Aorta (tissue), 5 donors: ENCODE measurements at regions of chr5 and their contacts with region 1.

Region 1: DNA sequence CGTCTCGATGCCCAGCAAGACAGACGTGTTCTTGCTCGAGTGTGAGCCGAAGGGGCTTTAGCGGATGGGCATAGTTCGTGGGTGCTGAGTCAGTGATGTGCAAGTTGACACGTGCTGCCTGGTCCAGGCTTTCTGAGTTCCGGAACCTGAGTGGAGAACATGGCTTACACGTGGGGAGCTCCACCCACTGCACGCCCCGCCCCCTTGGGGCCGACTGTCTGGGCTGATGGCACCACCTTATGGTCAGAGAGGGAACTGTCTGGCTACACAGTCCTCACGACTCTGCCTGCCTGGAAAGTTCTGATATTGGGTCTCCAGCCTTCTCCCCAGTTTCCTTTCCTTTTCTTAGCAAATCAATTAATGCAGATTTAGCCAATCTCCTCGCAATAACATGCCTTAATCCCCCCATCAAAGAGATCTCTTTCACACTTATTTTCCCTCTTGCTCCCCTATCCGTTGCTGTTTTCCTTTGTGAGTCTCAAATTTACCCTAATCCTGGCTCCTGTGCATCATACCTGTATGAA is 3.8 kb upstream of the STC2 start:
- DNase-seq: peak; percentile 86 to 94
- ATAC-seq: peak; percentile 91
- H3K4me3 ChIP-seq: no peak overlapping the region
- H3K27ac ChIP-seq: no peak overlapping the region
- H3K4me1 ChIP-seq: no peaks in the 10 kb centered on the region
- H3K27me3 ChIP-seq: peaks cover 0 to 2% of the 10 kb centered on the region in 2 donors

Region 2: DNA sequence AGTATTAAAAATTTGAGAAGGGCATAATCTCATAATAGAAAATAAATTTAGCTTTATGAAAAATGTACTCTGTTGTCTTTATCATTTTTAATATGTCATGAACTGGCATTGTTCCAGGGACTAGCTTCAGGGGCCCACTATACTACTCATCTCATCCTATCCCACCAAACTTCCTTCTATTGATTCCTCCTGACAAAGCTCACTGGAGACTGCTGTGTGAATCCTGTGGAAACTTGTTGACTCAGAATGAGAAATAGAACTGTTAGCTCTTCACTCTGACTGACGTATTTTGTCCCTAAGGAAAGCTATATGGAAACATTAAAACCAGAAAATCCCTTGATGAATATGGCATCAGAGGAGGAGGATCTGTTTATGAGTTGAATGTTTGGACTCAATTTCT is 217.5 kb before region 1 on chr5:
- intact Hi-C with region 1: no loop called
- DNase-seq: no peak
- ATAC-seq: no peak
- H3K4me3 ChIP-seq: no peak overlapping the region
- H3K27ac ChIP-seq: no peak overlapping the region
- H3K4me1 ChIP-seq: no peaks in the 10 kb centered on the region
- H3K27me3 ChIP-seq: no peaks in the 10 kb centered on the region

Region 3: DNA sequence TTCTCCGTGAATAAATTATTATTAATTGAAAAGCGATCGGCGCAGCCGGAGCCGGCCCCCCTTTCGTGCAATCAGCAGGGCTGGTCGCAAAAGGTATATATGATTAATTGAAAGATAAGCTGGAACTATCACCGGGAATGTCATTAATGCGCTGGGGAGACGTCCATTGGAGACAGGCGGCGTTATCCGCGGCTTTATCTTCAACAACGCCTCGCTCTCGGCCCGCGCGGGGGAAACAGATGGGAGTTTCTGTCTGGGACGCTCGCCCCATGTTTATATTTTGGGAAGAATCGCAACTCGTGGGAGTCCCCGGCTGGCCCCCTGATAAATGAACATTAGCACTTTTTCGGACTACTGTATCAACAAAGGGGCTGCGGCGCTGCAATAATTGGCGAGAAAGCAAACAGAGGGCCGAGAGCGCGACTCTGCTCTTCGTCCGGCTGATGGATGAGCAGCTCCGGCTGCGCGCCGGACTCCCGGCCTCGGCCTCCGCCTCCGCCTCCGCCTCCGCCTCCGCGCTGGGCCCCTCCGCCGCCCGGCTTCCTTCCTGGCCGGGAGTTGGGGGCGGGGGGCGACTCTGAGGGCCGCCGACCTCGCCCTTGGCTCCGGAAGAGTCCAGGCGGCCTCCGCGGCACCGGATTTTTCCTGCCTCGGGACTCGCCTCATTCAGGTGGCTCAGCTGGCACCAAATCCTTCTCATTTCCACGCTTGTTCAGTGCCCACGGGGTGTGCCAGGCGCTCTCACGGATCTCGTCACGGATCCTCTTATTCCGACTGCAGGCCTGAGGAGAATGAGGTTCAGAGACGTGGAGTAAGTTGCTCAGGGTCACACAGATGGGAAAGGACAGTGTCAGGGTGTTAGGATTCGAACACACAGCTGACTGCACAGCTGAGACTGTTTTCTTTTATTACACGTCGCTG is 93.4 kb before region 1 on chr5:
- intact Hi-C with region 1: no loop called
- DNase-seq: no peak
- ATAC-seq: no peak
- H3K4me3 ChIP-seq: no peak overlapping the region
- H3K27ac ChIP-seq: no peak overlapping the region
- H3K4me1 ChIP-seq: no peaks in the 10 kb centered on the region
- H3K27me3 ChIP-seq: peaks cover 2% of the 10 kb centered on the region in 2 donors

Region 4: DNA sequence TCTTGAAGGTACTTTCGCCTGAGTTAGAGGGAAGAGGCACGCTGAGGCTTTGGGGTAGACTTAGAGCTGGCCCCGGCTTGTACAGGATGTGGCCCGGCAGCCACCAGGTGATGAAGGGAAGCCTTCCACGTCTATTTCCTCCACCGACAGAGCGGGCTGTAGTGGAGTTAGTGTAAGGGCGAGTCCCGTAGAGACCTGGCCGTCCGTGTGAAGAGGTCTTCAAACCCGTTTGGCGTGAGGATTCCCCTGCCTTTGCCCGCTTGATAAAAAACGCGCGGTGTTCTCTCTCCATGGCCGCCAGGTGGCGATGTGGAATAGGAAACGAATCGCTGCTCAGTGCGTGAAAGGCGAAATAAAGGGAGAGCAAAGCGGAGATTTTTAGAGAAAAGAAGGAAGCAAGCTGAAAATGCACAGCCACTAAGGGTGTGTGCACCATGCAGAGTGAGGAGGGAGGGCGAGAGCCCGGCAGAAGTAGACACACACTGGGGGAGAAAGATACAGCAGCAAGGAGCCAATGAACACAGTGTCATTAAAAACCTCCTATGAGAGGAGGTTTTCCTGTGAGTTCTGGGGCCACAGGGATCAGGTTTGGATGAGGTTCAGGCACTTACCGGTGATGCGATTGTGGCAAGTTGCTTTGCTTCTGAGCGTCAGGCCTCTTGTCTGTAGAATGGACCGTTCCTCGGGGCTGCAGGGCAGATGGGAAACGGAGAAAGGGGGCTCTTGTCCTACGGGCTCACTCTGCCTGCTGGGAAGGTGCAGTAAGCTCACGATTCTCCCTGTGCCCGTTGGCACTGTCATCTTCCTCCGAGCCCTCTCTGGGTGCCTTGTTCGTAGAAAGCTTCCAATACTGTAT is 38.0 kb before region 1 on chr5:
- intact Hi-C with region 1: loop called (anchors 1 kb)
- DNase-seq: peak; percentile 81 to 92
- ATAC-seq: peak; percentile 86
- H3K4me3 ChIP-seq: no peak overlapping the region
- H3K27ac ChIP-seq: no peak overlapping the region
- H3K4me1 ChIP-seq: no peaks in the 10 kb centered on the region
- H3K27me3 ChIP-seq: no peaks in the 10 kb centered on the region

Region 5: DNA sequence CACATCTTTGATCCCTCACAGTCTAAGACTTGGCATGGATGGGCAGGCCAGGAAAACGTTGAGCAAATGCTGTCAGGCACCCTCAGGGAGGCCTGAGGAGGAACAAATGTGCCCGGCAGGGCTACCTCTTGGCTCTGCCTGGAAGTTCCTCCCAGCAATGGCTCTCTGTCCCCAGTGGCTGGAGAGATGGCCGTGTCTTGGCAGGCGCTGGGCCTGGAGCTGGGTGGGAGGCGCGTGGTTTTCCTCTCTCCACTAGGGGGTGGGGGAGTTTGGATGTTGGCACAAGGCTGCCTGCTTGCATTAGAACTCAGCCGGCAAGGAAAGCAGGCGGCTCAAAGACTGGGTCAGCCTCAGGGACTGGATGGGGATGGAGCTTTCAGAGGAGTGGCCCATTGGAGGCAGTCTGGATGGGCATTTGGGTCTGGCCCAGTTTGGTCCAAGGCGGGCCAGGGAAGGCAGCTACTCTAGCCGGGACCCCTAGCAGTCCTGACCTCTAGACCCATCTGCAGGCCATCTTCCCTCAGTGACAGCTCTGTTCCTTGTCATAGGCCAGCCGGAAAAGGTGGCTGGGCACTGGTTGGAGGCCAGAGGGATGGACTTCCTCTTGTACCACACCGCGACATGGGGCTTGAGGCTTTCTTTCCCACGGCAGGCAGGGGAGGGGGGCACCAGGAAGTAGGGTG is 64.4 kb after region 1 on chr5:
- intact Hi-C with region 1: no loop called
- DNase-seq: no peak
- ATAC-seq: no peak
- H3K4me3 ChIP-seq: no peak overlapping the region
- H3K27ac ChIP-seq: no peak overlapping the region
- H3K4me1 ChIP-seq: peaks cover 0 to 3% of the 10 kb centered on the region in 2 donors
- H3K27me3 ChIP-seq: no peaks in the 10 kb centered on the region

Region 6: GRCh38 chr5:173412566-173412965 is 80.5 kb after region 1 on chr5:
- intact Hi-C with region 1: no loop called
- DNase-seq: no peak
- ATAC-seq: no peak
- H3K4me3 ChIP-seq: no peak overlapping the region
- H3K27ac ChIP-seq: no peak overlapping the region
- H3K4me1 ChIP-seq: no peaks in the 10 kb centered on the region
- H3K27me3 ChIP-seq: no peaks in the 10 kb centered on the region